Endothelial cell of umbilical vein (primary cell): ENCODE measurements at regions of chr7 and their contacts with region 1.

Region 1: GRCh38 chr7:46752881-46753366 is 829.0 kb downstream of the TNS3 start:
- DNase-seq: peak; percentile 95
- H3K4me3 ChIP-seq: no peak overlapping the region
- H3K27ac ChIP-seq: peak overlapping the region; percentile 76
- H3K4me1 ChIP-seq: peaks cover 44% of the 10 kb centered on the region
- H3K27me3 ChIP-seq: no peaks in the 10 kb centered on the region
- CTCF ChIP-seq: no peak
- POLR2A ChIP-seq: peak; percentile 51

Region 2: GRCh38 chr7:46544374-46545008 is 208.4 kb before region 1 on chr7:
- CTCF ChIA-PET with region 1: no interaction called
- POLR2A ChIA-PET with region 1: no interaction called
- dilution Hi-C with region 1: no loop called
- intact Hi-C with region 1: loop called (anchors 1 kb)
- DNase-seq: peak; percentile 72
- H3K4me3 ChIP-seq: no peak overlapping the region
- H3K27ac ChIP-seq: peak overlapping the region; percentile 96
- H3K4me1 ChIP-seq: peaks cover 26% of the 10 kb centered on the region
- H3K27me3 ChIP-seq: no peaks in the 10 kb centered on the region
- CTCF ChIP-seq: no peak
- POLR2A ChIP-seq: no peak

Region 3: DNA sequence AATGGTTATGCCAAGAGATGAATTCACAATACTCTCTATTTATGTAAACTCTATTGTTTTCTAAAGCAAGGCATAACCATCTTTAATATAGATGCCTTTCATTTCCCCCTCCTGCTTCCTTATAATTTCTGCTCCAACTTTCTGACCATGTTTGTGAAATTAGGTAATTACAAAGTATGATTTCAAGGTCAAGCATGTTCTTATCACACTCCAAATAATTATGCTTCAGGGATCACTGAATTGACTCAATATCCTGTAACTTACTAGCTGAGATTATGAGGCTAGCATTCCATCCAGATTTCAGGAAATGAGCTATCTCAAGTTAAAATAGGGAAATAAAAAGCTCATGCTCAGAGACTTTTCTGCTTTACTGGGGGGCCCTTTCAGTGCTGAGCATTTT is 176.0 kb before region 1 on chr7:
- CTCF ChIA-PET with region 1: interaction called, 3 read pairs
- POLR2A ChIA-PET with region 1: no interaction called
- dilution Hi-C with region 1: no loop called
- intact Hi-C with region 1: loop called (anchors 1 kb)
- DNase-seq: peak; percentile 88
- H3K4me3 ChIP-seq: no peak overlapping the region
- H3K27ac ChIP-seq: peak overlapping the region; percentile 55
- H3K4me1 ChIP-seq: peaks cover 23% of the 10 kb centered on the region
- H3K27me3 ChIP-seq: no peaks in the 10 kb centered on the region
- CTCF ChIP-seq: no peak
- POLR2A ChIP-seq: peak; percentile 40

Region 4: DNA sequence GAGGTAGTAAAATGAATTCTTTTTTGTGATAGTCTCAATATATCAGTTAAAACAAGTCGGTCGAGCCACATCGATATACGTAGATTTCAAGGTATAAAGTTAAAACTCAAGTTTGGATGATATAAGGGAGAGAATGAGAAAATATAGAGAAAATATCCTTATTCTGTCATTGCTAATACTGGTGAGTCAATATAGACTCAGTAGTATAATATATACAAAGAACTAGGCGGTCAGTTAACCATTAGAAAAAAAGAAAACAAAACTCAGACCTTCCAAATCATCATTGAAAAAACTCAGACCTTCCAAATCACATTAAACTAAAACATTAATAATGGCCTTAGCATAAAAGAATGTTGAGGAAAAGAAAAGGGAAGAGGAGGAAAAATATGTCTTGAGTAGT is 14.8 kb before region 1 on chr7:
- CTCF ChIA-PET with region 1: no interaction called
- POLR2A ChIA-PET with region 1: no interaction called
- dilution Hi-C with region 1: no loop called
- intact Hi-C with region 1: no loop called
- DNase-seq: no peak
- H3K4me3 ChIP-seq: no peak overlapping the region
- H3K27ac ChIP-seq: no peak overlapping the region
- H3K4me1 ChIP-seq: no peaks in the 10 kb centered on the region
- H3K27me3 ChIP-seq: no peaks in the 10 kb centered on the region
- CTCF ChIP-seq: no peak
- POLR2A ChIP-seq: no peak

Region 5: DNA sequence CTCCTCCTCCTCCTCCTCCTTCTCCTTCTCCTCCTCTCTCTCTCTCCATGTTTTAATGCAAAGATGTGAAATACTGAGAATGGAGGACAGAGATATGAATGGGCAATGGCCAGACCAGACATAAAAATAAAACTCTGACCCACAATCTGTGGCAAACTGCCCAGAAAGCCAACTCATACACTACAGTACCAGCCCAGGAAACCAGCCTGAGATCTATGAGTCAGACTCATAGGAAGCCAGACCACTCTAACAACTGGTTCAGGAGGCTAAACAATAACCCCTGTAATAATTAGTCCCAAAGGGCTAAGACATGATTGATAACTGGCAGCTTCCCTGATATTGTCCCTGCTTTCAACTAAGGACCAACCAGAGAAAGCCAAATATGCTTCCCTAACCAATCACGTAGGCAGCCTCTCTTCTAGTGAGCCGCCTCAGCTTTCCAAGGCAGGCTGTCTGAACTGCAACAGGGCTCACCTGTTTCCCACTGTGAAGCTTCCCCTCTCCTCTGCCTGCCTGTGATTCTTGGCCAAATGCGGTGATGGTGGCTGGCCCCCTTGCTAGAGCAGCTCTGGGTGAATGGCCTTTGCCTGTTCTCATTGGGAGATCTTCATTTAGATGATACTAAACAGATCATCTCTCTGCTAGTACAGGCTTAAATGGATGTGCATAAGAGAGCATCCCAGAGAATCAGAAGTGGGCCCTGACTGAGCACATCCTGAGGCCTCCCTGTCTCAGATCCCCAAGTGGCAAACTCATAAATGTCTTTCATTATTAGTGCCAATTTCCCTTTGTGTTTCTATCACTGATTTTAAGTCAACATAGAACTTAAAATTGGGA is 11.4 kb after region 1 on chr7:
- CTCF ChIA-PET with region 1: interaction called, 3 read pairs
- POLR2A ChIA-PET with region 1: no interaction called
- dilution Hi-C with region 1: no loop called
- intact Hi-C with region 1: loop called (anchors 1 kb)
- DNase-seq: peak; percentile 99
- H3K4me3 ChIP-seq: no peak overlapping the region
- H3K27ac ChIP-seq: peak overlapping the region; percentile 69
- H3K4me1 ChIP-seq: peaks cover 28% of the 10 kb centered on the region
- H3K27me3 ChIP-seq: no peaks in the 10 kb centered on the region
- CTCF ChIP-seq: no peak
- POLR2A ChIP-seq: no peak

Region 6: GRCh38 chr7:47039904-47040303 is 287.0 kb after region 1 on chr7:
- CTCF ChIA-PET with region 1: no interaction called
- POLR2A ChIA-PET with region 1: no interaction called
- dilution Hi-C with region 1: no loop called
- intact Hi-C with region 1: loop called (anchors 2 kb)
- DNase-seq: peak; percentile 97
- H3K4me3 ChIP-seq: no peak overlapping the region
- H3K27ac ChIP-seq: peak overlapping the region; percentile 61
- H3K4me1 ChIP-seq: peaks cover 24% of the 10 kb centered on the region
- H3K27me3 ChIP-seq: no peaks in the 10 kb centered on the region
- CTCF ChIP-seq: no peak
- POLR2A ChIP-seq: peak; percentile 32

Region 7: DNA sequence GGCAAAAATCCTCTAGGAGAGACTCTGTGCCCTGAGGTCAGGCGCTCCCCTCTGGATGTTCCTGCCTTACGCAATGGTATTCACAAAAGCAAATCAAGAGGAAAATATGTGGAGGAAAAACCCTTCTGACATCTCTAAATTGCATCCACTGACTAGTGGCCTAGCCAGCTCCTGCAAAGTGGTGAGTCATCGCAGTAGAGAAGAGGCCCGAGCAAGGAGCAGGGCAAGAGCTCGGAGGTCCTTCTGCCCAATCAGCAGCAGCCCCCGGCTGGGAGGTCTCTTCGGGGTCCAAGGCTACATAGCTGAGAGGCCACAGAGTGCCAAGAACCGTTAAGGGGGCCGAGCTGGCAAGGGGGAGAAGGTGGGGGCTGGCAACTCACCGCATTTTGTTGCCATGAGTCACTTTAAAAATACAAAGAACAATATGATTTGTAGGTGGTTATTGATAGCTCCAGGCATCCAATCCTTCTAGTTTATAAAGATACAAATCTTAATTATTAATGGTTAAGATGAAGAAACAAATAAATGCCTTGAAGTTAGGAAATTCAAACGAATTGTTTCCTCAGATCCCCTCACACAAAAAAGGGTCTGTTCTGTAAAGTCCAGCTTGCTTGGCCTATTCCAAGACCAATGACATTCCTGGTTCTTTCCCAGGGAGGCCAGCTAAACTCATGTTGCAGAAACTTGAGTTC is 1033.8 kb after region 1 on chr7:
- CTCF ChIA-PET with region 1: no interaction called
- POLR2A ChIA-PET with region 1: no interaction called
- dilution Hi-C with region 1: no loop called
- intact Hi-C with region 1: loop called (anchors 10 kb)
- DNase-seq: peak; percentile 98
- H3K4me3 ChIP-seq: no peak overlapping the region
- H3K27ac ChIP-seq: peak overlapping the region; percentile 100
- H3K4me1 ChIP-seq: peaks cover 51% of the 10 kb centered on the region
- H3K27me3 ChIP-seq: no peaks in the 10 kb centered on the region
- CTCF ChIP-seq: no peak
- POLR2A ChIP-seq: no peak